ENCODE measurements at regions of chr15 and their contacts with region 1.

Region 1: GRCh38 chr15:57861036-57861638 is 154.6 kb downstream of the POLR2M start:
- DNase-seq: peak; percentile 61
- ATAC-seq: no peak
- H3K4me3 Mint-ChIP-seq: no peak overlapping the region
- H3K27ac Mint-ChIP-seq: no peak overlapping the region
- H3K4me1 Mint-ChIP-seq: no peaks in the 10 kb centered on the region
- H3K27me3 Mint-ChIP-seq: peaks cover 33% of the 10 kb centered on the region

Region 2: DNA sequence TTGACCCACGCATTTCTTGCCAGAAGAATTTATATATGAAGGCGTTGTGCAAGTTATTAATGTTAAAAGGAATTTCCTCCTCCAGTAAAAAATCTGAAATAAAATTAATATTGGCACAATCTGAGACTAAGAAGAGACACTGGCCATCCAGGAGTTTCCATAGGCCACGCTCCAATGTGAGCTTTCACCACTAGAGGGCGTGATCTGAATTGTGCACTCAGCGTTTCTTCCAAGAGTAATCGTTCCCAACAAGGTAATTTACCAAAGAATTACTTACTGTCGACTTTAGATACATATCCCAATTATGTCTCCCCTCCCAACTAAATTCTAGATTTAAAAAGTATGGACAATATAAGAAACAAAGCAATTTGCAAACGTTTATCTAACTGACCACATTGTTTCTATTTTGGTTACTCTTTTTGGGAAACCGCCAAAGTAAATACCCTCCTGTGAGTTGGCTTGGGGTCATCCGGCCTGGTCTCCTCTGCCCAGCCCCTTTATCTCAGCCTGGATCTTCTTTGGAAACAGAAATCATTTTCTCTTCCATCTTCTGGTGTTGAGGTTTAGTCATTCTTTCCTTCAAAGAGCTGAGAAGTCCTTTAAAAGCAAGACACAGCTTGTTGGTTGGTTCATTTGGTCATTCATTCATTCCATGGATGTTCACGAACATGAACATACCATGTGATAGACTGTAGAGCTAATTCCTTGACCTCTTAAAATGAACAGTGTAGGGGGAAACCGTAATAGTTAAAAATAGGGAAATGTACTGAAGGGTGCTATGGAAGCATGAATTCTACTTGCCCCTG is 128.4 kb before region 1 on chr15:
- CTCF ChIA-PET with region 1: interaction called, 31 read pairs
- POLR2A ChIA-PET with region 1: no interaction called
- DNase-seq: peak; percentile 57
- ATAC-seq: peak; percentile 69
- H3K4me3 Mint-ChIP-seq: no peak overlapping the region
- H3K27ac Mint-ChIP-seq: no peak overlapping the region
- H3K4me1 Mint-ChIP-seq: no peaks in the 10 kb centered on the region
- H3K27me3 Mint-ChIP-seq: no peaks in the 10 kb centered on the region

Region 3: GRCh38 chr15:57769266-57769665 is 91.9 kb before region 1 on chr15:
- CTCF ChIA-PET with region 1: interaction called, 26 read pairs
- POLR2A ChIA-PET with region 1: no interaction called
- DNase-seq: no peak
- ATAC-seq: no peak
- H3K4me3 Mint-ChIP-seq: no peak overlapping the region
- H3K27ac Mint-ChIP-seq: no peak overlapping the region
- H3K4me1 Mint-ChIP-seq: peaks cover 20% of the 10 kb centered on the region
- H3K27me3 Mint-ChIP-seq: peaks cover 4% of the 10 kb centered on the region

Region 4: DNA sequence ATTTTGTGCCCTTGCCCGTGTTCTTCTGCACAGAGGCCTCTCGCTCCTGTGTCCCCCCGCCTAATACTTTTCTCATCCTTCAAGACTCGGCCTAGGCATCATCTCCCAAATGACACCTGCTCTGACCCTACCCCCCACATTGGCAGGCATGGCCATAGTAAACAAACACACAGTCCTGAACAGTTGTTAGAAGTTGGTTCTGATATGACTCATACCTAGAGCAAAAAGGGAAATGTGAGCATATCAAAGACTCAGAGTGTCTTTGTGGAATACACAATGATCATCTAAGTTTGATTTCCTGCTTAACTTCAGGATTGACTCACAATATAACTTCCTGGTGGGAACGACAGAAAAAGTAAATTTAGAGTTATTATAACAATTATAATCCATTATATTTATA is 34.1 kb before region 1 on chr15:
- CTCF ChIA-PET with region 1: interaction called, 14 read pairs
- POLR2A ChIA-PET with region 1: no interaction called
- DNase-seq: no peak
- ATAC-seq: no peak
- H3K4me3 Mint-ChIP-seq: no peak overlapping the region
- H3K27ac Mint-ChIP-seq: no peak overlapping the region
- H3K4me1 Mint-ChIP-seq: peaks cover 2% of the 10 kb centered on the region
- H3K27me3 Mint-ChIP-seq: peaks cover 4% of the 10 kb centered on the region

Region 5: DNA sequence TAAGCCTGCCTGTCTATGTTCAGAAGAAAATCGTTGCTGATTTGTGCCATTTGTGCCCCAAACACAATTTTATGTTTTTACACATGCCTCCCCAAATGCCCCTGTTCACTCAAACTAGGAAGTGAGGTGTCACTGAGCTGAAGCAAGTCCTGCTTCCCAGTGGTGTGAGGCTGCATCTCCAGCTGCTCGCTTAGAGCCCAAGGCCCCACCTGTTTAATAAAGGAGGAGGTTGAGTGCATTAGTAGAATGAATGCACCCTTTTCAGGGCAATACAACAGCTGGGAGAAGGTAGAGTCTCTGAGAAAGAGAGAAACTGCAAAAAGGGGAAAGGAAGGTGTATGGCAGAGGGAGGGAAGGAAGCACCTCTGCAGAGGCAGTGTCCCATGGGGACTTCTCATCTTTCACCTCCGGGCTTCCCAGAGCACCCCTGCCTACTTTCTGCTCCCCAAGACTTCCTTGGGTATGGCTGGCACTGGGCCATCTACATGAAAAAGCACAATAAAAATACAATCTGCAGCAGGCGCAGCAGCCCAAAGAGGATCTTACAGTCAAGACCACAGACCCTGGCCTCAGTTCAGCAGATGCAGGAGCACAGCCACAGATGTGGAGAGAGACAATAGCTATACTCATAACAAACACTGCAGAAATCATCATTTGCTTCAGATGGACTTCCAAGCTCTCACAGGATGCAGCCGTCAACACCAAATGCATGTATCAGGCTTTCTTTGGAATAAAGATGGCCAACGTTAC is 11.3 kb after region 1 on chr15:
- CTCF ChIA-PET with region 1: interaction called, 26 read pairs
- POLR2A ChIA-PET with region 1: no interaction called
- DNase-seq: no peak
- ATAC-seq: no peak
- H3K4me3 Mint-ChIP-seq: no peak overlapping the region
- H3K27ac Mint-ChIP-seq: no peak overlapping the region
- H3K4me1 Mint-ChIP-seq: peaks cover 14% of the 10 kb centered on the region
- H3K27me3 Mint-ChIP-seq: peaks cover 71% of the 10 kb centered on the region

Measured in activated CD8-positive, alpha-beta T cell treated with anti-CD3 and anti-CD28 coated beads, Interleukin-2, amount 10 ng/mL, durations not matched to agents 7 days and 5 days (primary cell).